ENCODE measurements at regions of chr20 and their contacts with region 1.

Region 1: DNA sequence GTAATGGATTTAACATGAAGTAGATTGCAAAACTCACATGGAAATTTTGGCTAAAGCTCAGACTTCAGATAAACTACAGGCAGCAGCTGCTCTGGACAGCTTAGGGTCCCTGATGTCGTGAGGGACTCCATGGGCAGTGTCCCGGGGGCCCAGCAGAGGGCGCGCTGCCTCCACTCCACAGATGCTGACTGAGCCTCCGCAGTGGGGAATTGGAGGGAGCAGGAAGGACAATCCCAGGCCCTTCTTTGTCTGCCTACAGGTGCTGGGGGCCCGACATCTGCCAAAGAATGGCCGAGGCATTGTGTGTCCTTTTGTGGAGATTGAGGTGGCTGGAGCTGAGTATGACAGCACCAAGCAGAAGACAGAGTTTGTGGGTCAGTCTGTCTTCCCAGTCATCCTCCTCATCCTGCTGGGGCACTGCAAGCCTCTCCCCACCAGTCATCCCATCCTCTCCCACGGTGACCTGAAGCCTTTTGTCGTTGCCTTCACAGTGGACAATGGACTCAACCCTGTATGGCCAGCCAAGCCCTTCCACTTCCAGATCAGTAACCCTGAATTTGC is 35.9 kb downstream of the PLCG1 start:
- DNase-seq: peak; percentile 92
- H3K4me3 Mint-ChIP-seq: no peak overlapping the region
- H3K27ac Mint-ChIP-seq: no peak overlapping the region
- H3K4me1 Mint-ChIP-seq: no peaks in the 10 kb centered on the region
- H3K27me3 Mint-ChIP-seq: no peaks in the 10 kb centered on the region
- CTCF ChIP-seq: peak; percentile 96

Region 2: GRCh38 chr20:41136680-41137613 is 36.3 kb before region 1 on chr20 and contains the start of gene PLCG1:
- CTCF ChIA-PET with region 1: interaction called, 9 read pairs
- intact Hi-C with region 1: loop called (anchors 1 kb)
- DNase-seq: peak; percentile 96
- H3K4me3 Mint-ChIP-seq: peak within 1 kb of the TSS; percentile 78
- H3K27ac Mint-ChIP-seq: peak within 1 kb of the TSS; percentile 82
- H3K4me1 Mint-ChIP-seq: peaks cover 45% of the 10 kb centered on the region
- H3K27me3 Mint-ChIP-seq: no peaks in the 10 kb centered on the region
- CTCF ChIP-seq: no peak
- total RNA-seq, gene PLCG1: 91.1 and 127 TPM in 2 replicates

Region 3: DNA sequence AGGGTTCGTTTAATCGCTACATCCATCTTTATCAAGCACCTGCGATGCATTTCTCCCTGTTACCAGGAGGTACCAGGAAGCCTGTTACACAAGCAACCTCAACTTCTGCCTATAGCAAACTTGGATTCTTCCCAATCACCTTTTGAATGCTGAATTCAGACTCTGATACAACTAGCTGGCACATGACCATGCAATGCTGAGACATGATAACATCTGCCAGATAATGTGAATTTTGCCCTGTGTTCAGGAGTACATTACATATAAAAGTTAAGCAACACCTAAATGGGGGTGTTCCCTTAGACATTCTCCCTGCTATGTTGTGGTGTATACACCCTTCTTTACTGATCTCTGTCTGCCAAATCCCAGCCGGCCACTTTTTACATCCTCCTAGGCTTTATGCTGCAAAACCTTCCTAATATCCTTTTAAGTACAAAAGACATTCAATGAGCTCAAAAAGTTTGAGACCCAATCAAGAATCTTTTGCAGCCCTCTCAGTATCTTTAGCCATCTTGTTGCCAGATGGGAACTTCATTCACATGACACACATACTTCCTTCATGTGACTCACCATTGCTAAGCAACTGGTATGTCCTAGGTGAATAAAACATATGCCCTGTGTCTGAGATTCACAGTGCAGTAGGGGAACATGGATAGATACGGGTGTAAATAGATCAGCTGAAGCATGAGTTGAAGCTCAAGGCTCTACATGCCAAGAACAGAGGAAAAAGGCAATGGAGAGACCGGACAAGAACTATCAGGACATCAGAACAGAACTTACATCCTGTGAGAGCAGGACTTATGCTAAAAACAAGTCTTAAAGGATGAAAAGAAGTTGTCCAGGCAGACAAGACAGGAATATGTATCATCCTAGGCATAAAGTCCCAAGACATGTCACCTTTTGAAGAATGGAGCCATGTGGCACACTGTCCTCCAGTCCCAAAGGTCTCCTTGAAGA is 60.0 kb after region 1 on chr20:
- CTCF ChIA-PET with region 1: interaction called, 16 read pairs
- intact Hi-C with region 1: loop called (anchors 1 kb)
- DNase-seq: no peak
- H3K4me3 Mint-ChIP-seq: peak overlapping the region; percentile 35
- H3K27ac Mint-ChIP-seq: peak overlapping the region; percentile 42
- H3K4me1 Mint-ChIP-seq: peaks cover 19% of the 10 kb centered on the region
- H3K27me3 Mint-ChIP-seq: no peaks in the 10 kb centered on the region
- CTCF ChIP-seq: no peak

Region 4: GRCh38 chr20:41411391-41411847 is 238.2 kb after region 1 on chr20:
- CTCF ChIA-PET with region 1: interaction called, 3 read pairs
- intact Hi-C with region 1: loop called (anchors 1 kb)
- DNase-seq: no peak
- H3K4me3 Mint-ChIP-seq: no peak overlapping the region
- H3K27ac Mint-ChIP-seq: no peak overlapping the region
- H3K4me1 Mint-ChIP-seq: no peaks in the 10 kb centered on the region
- H3K27me3 Mint-ChIP-seq: no peaks in the 10 kb centered on the region
- CTCF ChIP-seq: peak; percentile 31

Measured in Calu3 (cell line).